ENCODE measurements at regions of chr1 and their contacts with region 1.

Region 1: DNA sequence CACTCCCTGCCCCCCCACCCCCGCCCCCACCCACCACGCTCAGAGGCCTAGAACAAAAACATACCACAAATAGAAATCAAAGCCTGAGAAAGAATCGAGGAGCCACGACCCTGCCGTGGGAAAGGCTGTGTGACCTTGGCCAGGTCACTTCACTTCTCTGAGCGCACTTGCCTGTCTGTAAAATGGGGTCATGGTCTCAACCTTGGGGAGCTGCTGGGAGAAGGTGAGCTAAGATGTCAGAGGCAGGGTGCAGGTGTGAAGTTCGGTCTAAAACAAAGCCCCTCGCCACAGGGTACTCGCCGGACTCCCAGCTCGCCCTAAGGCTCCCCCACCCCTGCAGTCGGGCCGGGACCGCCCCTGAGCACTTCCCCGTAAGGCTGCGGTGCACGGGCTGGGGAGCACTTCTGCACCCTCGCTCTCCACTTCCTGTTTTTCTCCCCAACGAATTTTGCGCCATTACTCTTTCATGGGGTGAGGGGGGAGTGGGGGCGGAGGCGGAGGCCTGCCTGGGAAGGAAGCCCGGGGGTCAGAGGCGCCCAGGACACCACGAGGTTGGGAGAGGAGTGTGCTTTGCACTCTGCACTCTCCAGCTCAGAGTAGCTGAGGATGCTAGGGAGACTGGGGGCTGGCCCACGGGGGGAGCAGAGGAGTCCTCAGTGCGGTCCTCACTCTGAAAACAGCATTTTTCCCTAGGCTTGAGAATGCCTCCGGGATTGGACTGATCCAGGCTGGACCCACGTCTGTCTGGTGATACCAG is 21.9 kb upstream of the PIK3CD start:
- DNase-seq: peak; percentile 71
- ATAC-seq: peak; percentile 45
- H3K4me3 ChIP-seq: peak overlapping the region; percentile 86
- H3K27ac ChIP-seq: peak overlapping the region; percentile 98
- H3K4me1 ChIP-seq: peaks cover 37% of the 10 kb centered on the region
- H3K27me3 ChIP-seq: no peaks in the 10 kb centered on the region
- CTCF ChIP-seq: no peak
- EP300 ChIP-seq: peak; percentile 57 to 64; a peak in 1 of 4 replicates
- POLR2A ChIP-seq: peak; percentile 76
- RAD21 ChIP-seq: no peak

Region 2: GRCh38 chr1:9615316-9616063 is 14.1 kb before region 1 on chr1:
- CTCF ChIA-PET with region 1: interaction called, 42 read pairs
- POLR2A ChIA-PET with region 1: interaction called, 5 read pairs
- RAD21 ChIA-PET with region 1: interaction called, 51 read pairs
- SMC1A ChIA-PET with region 1: interaction called, 45 read pairs
- in situ Hi-C with region 1: no loop called
- intact Hi-C with region 1: no loop called
- DNase-seq: no peak
- ATAC-seq: peak; percentile 98
- H3K4me3 ChIP-seq: no peak overlapping the region
- H3K27ac ChIP-seq: no peak overlapping the region
- H3K4me1 ChIP-seq: no peaks in the 10 kb centered on the region
- H3K27me3 ChIP-seq: no peaks in the 10 kb centered on the region
- CTCF ChIP-seq: peak; percentile 95 to 96 (median 96)
- EP300 ChIP-seq: no peak
- POLR2A ChIP-seq: no peak
- RAD21 ChIP-seq: peak; percentile 77

Region 3: GRCh38 chr1:9671377-9672140 is 41.9 kb after region 1 on chr1:
- CTCF ChIA-PET with region 1: interaction called, 9 read pairs
- POLR2A ChIA-PET with region 1: interaction called, 4 read pairs
- RAD21 ChIA-PET with region 1: interaction called, 3 read pairs
- SMC1A ChIA-PET with region 1: interaction called, 5 read pairs
- in situ Hi-C with region 1: no loop called
- intact Hi-C with region 1: loop called (anchors 5 kb)
- DNase-seq: no peak
- ATAC-seq: no peak
- H3K4me3 ChIP-seq: no peak overlapping the region
- H3K27ac ChIP-seq: no peak overlapping the region; the same call in 1 of the 2 replicates
- H3K4me1 ChIP-seq: peaks cover 18% of the 10 kb centered on the region
- H3K27me3 ChIP-seq: no peaks in the 10 kb centered on the region
- CTCF ChIP-seq: no peak
- EP300 ChIP-seq: no peak
- POLR2A ChIP-seq: no peak
- RAD21 ChIP-seq: no peak

Region 4: DNA sequence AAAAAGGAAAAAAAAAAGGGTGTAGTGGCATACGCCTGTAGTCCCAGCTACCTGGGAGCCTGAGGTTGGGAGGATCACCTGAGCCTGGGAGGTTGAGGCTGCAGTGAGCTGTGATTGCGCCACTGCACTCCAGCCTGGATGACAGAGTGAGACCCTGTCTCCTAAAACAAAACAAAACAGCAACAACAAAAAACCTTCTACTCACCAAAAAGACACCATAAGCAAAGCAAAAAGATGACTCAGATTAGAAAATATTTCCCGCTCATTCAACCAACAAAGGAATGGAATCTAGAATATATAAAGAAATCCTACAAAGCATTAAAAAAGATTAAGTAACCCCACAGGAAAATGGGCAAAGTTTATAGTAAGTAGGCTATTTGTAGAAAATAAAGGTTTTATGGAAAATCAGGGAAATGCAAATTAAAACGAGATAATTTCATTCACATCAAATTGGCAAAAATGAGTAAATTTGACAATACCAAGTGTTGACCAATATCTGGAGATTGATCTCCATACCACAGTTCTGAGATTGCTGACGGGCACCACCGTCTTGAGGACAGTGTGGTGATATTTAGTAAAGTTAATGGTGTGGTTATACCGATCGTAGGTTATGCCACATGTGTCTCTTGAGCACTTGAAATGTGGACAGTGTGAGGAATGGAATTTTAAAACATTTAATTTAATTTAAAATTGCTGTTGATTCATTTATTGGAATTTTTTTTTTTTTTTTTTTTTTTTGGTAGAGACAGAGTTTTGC is 75.9 kb after region 1 on chr1:
- CTCF ChIA-PET with region 1: interaction called, 34 read pairs
- POLR2A ChIA-PET with region 1: interaction called, 4 read pairs
- RAD21 ChIA-PET with region 1: interaction called, 3 read pairs
- SMC1A ChIA-PET with region 1: interaction called, 4 read pairs
- in situ Hi-C with region 1: no loop called
- intact Hi-C with region 1: no loop called
- DNase-seq: no peak
- ATAC-seq: no peak
- H3K4me3 ChIP-seq: no peak overlapping the region
- H3K27ac ChIP-seq: no peak overlapping the region
- H3K4me1 ChIP-seq: peaks cover 16% of the 10 kb centered on the region
- H3K27me3 ChIP-seq: no peaks in the 10 kb centered on the region
- CTCF ChIP-seq: no peak
- EP300 ChIP-seq: no peak
- POLR2A ChIP-seq: no peak
- RAD21 ChIP-seq: no peak

Region 5: DNA sequence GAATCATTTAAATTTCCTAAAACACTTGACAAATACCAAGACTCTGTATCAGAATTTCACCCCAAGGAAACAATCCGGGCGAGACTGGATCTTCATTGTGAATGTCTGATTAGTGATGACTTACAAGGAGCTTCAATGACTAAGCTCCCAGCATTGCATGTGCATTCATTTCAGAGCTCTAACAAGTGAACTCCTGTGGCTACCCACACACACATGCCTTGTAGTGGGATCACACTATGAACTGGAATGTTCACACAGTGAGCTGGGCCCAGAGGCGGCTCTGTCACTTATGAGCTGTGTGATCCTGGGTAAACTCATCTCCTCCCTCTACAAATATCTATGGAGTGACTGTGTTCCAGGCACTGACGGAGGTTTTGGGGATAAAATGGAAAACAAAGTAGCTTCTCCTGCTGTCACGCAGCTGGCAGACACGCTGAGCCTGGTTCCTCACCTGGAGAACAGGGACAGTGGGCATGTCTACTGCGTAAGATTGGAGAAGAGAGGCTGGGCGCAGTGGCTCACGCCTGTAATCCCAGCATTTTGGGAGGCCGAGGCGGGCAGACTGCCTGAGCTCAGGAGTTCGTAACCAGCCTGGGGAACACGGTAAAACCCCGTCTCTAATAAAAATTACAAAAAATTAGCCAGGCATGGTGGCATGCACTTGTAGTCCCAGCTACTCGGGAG is 137.3 kb after region 1 on chr1:
- CTCF ChIA-PET with region 1: no interaction called
- POLR2A ChIA-PET with region 1: no interaction called
- RAD21 ChIA-PET with region 1: no interaction called
- SMC1A ChIA-PET with region 1: no interaction called
- in situ Hi-C with region 1: no loop called
- intact Hi-C with region 1: no loop called
- DNase-seq: no peak
- ATAC-seq: no peak
- H3K4me3 ChIP-seq: no peak overlapping the region
- H3K27ac ChIP-seq: no peak overlapping the region
- H3K4me1 ChIP-seq: no peaks in the 10 kb centered on the region
- H3K27me3 ChIP-seq: no peaks in the 10 kb centered on the region
- CTCF ChIP-seq: no peak
- EP300 ChIP-seq: no peak
- POLR2A ChIP-seq: no peak
- RAD21 ChIP-seq: no peak

Region 6: GRCh38 chr1:9784508-9785133 is 155.0 kb after region 1 on chr1:
- CTCF ChIA-PET with region 1: interaction called, 51 read pairs
- POLR2A ChIA-PET with region 1: no interaction called
- RAD21 ChIA-PET with region 1: interaction called, 13 read pairs
- SMC1A ChIA-PET with region 1: interaction called, 18 read pairs
- in situ Hi-C with region 1: no loop called
- intact Hi-C with region 1: loop called (anchors 5 kb)
- DNase-seq: peak; percentile 61
- ATAC-seq: peak; percentile 28
- H3K4me3 ChIP-seq: peak overlapping the region; percentile 4; the same call in 1 of the 2 replicates
- H3K27ac ChIP-seq: peak overlapping the region; percentile 69
- H3K4me1 ChIP-seq: peaks cover 46% of the 10 kb centered on the region
- H3K27me3 ChIP-seq: no peaks in the 10 kb centered on the region
- CTCF ChIP-seq: peak; percentile 79 to 92 (median 86)
- EP300 ChIP-seq: no peak
- POLR2A ChIP-seq: no peak
- RAD21 ChIP-seq: peak; percentile 96

Measured in GM12878 (cell line).